Psoas muscle (tissue), 8 donors: ENCODE measurements at regions of chr6 and their contacts with region 1.

Region 1: GRCh38 chr6:23435126-23435525 is 690.9 kb upstream of the NRSN1 start:
- DNase-seq: no peak
- ATAC-seq: no peak
- H3K4me3 ChIP-seq: no peak overlapping the region
- H3K27ac ChIP-seq: no peak overlapping the region
- H3K4me1 ChIP-seq: no peaks in the 10 kb centered on the region
- H3K27me3 ChIP-seq: no peaks in the 10 kb centered on the region
- CTCF ChIP-seq: no peak

Region 2: GRCh38 chr6:23390221-23390620 is 44.9 kb before region 1 on chr6:
- intact Hi-C with region 1: loop called in 1 of 2 experiments (anchors 1 kb)
- DNase-seq: no peak
- ATAC-seq: no peak
- H3K4me3 ChIP-seq: no peak overlapping the region
- H3K27ac ChIP-seq: no peak overlapping the region
- H3K4me1 ChIP-seq: no peaks in the 10 kb centered on the region
- H3K27me3 ChIP-seq: no peaks in the 10 kb centered on the region
- CTCF ChIP-seq: no peak

Region 3: DNA sequence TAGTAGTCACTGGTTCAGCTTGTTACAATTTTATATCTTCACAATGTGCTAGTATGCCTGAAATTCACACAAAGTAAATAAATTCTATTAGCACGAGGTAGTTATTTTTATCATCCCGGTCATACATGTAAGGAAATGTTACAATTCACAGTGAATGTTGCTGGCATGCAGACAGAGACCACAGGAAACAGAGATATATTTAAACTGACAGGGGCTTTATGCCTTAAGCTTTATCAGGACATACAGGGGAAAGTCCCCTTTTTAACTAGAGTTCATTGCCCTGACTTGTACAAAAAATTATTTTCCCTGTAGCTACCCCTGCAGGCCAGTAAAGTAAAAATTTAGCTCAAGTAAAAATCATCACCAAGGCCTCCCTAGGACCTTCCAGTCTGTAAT is 21.1 kb before region 1 on chr6:
- intact Hi-C with region 1: no loop called
- DNase-seq: no peak
- ATAC-seq: no peak
- H3K4me3 ChIP-seq: no peak overlapping the region
- H3K27ac ChIP-seq: no peak overlapping the region
- H3K4me1 ChIP-seq: no peaks in the 10 kb centered on the region
- H3K27me3 ChIP-seq: no peaks in the 10 kb centered on the region
- CTCF ChIP-seq: peak; percentile 19

Region 4: DNA sequence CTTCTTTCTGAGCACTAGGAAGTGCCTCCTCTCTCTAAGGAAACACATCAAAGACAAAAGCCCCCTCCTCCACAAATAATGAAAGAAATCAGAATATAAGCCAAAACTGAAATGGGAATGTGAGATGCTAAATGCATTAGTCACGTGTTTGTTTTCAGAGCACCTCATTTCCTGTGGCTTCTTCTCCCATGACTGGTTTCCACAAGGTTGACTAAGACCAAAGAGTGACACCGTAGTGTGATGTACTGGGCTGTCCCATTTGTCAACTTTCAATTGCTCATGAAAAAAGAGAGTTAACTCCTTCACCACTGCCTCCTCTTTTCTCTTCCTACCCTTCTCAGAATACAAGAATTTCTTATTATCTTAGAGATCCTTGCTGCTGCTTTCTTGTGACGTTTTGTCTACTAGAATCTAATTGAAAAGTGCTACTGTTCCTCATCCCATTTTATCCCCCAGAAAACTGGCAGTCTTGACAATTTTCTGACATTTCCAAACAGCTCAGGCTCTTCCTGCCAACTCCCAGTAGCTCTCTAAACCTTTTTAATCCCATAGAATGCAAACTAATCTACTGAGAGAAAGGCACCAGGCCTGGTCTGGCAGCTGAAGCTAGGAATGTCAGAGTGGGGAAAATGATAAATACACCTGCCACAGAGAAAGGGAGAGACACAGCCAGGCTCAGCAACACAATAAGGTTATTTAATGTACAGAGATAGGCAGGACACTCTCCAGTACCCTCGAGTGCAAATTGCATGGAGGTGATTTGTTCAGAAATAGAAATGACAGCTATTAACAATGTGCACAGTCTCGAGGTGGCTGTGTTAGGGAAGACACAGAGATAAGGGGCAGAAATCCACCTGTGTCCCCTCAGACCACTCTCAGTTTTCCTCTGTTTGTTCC is 19.2 kb after region 1 on chr6:
- intact Hi-C with region 1: no loop called
- DNase-seq: no peak
- ATAC-seq: no peak
- H3K4me3 ChIP-seq: no peak overlapping the region
- H3K27ac ChIP-seq: no peak overlapping the region
- H3K4me1 ChIP-seq: no peaks in the 10 kb centered on the region
- H3K27me3 ChIP-seq: no peaks in the 10 kb centered on the region
- CTCF ChIP-seq: no peak